Activated B cell treated with CpG ODN at 0.5 μM for 24 hours (primary cell): ENCODE measurements at regions of chr6 and their contacts with region 1.

Region 1: GRCh38 chr6:79246891-79247290 is 12.4 kb upstream of the HMGN3 start:
- DNase-seq: no peak
- ATAC-seq: no peak
- H3K4me3 Mint-ChIP-seq: no peak overlapping the region
- H3K27ac Mint-ChIP-seq: no peak overlapping the region
- H3K4me1 Mint-ChIP-seq: peaks cover 15% of the 10 kb centered on the region
- H3K27me3 Mint-ChIP-seq: no peaks in the 10 kb centered on the region
- CTCF ChIP-seq: no peak

Region 2: GRCh38 chr6:79544939-79545450 is 298.1 kb after region 1 on chr6:
- CTCF ChIA-PET with region 1: no interaction called
- POLR2A ChIA-PET with region 1: no interaction called
- intact Hi-C with region 1: loop called (anchors 5 kb)
- DNase-seq: no peak
- ATAC-seq: peak; percentile 56
- H3K4me3 Mint-ChIP-seq: peak overlapping the region; percentile 17
- H3K27ac Mint-ChIP-seq: no peak overlapping the region
- H3K4me1 Mint-ChIP-seq: peaks cover 8% of the 10 kb centered on the region
- H3K27me3 Mint-ChIP-seq: no peaks in the 10 kb centered on the region
- CTCF ChIP-seq: no peak